Mammary epithelial cell (primary cell): ENCODE measurements at regions of chr2 and their contacts with region 1.

Region 1: GRCh38 chr2:42360890-42361727 is at the start of gene COX7A2L:
- DNase-seq: peak; percentile 95
- H3K4me3 ChIP-seq: peak within 1 kb of the TSS; percentile 79 to 99 (median 95)
- H3K27ac ChIP-seq: peak within 1 kb of the TSS; percentile 94
- H3K4me1 ChIP-seq: peaks cover 4% of the 10 kb centered on the region
- H3K27me3 ChIP-seq: no peaks in the 10 kb centered on the region
- CTCF ChIP-seq: peak in 1 of 2 donors; percentile 48
- total RNA-seq, gene COX7A2L: 129 to 238 TPM

Region 2: DNA sequence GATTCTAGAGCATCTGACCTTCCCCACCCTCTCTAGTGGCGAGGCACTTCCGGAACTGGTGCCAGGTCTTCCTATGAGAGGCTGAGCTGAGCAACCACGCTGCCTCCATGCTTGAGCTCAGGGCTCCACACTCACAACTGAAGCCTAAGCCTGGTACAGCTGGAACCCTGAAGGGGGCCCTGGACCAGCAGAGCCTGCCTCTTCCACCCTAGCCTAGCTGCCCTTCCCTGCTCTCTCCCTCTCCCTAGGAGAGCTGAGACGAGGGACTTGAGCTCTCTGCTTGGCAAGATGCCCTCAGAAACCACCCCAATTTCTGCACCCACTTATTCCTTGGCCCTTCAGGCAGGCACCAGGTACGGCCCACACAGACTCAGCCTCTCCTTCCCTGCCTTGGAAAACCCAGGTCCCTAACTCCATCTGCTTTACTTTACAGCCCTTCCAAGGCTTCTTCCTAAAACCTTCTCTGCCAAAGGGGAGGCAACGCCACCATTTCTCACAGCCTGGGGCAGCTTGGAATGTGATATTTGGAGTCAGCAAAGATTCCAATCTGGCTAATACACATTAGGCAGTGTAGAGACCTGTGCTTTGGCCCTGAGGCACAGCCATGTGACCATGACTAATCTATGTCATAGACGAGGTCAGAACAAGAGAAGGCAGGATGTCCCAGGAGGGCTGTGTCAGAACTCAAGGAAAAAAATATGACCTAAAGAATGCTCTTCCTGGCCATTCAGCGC is 18.9 kb before region 1 on chr2:
- CTCF ChIA-PET with region 1: no interaction called
- dilution Hi-C with region 1: no loop called
- in situ Hi-C with region 1: no loop called
- intact Hi-C with region 1: loop called (anchors 2 kb)
- DNase-seq: peak; percentile 78
- H3K4me3 ChIP-seq: no peak overlapping the region
- H3K27ac ChIP-seq: peak overlapping the region; percentile 33
- H3K4me1 ChIP-seq: peaks cover 13% of the 10 kb centered on the region
- H3K27me3 ChIP-seq: no peaks in the 10 kb centered on the region
- CTCF ChIP-seq: no peak

Region 3: GRCh38 chr2:42386684-42387083 is 25.6 kb after region 1 on chr2:
- CTCF ChIA-PET with region 1: no interaction called
- dilution Hi-C with region 1: no loop called
- in situ Hi-C with region 1: no loop called
- intact Hi-C with region 1: loop called (anchors 1 kb)
- DNase-seq: no peak
- H3K4me3 ChIP-seq: no peak overlapping the region
- H3K27ac ChIP-seq: no peak overlapping the region
- H3K4me1 ChIP-seq: no peaks in the 10 kb centered on the region
- H3K27me3 ChIP-seq: no peaks in the 10 kb centered on the region
- CTCF ChIP-seq: peak; percentile 53 to 63

Region 4: GRCh38 chr2:42494355-42495233 is 133.5 kb after region 1 on chr2:
- CTCF ChIA-PET with region 1: no interaction called
- dilution Hi-C with region 1: no loop called
- in situ Hi-C with region 1: no loop called
- intact Hi-C with region 1: loop called (anchors 2 kb)
- DNase-seq: peak; percentile 87
- H3K4me3 ChIP-seq: peak overlapping the region; percentile 49 to 62 (median 50)
- H3K27ac ChIP-seq: no peak overlapping the region
- H3K4me1 ChIP-seq: peaks cover 13% of the 10 kb centered on the region
- H3K27me3 ChIP-seq: peaks cover 29% of the 10 kb centered on the region
- CTCF ChIP-seq: peak; percentile 87 to 91

Region 5: GRCh38 chr2:43024515-43025011 is 663.5 kb after region 1 on chr2:
- CTCF ChIA-PET with region 1: no interaction called
- dilution Hi-C with region 1: no loop called
- in situ Hi-C with region 1: no loop called
- intact Hi-C with region 1: no loop called
- DNase-seq: no peak
- H3K4me3 ChIP-seq: no peak overlapping the region
- H3K27ac ChIP-seq: no peak overlapping the region
- H3K4me1 ChIP-seq: peaks cover 18% of the 10 kb centered on the region
- H3K27me3 ChIP-seq: no peaks in the 10 kb centered on the region
- CTCF ChIP-seq: peak; percentile 63 to 87